Kidney (tissue), 22 donors: ENCODE measurements at regions of chr14 and their contacts with region 1.

Region 1: GRCh38 chr14:96098309-96099001 is 59.3 kb downstream of the C14orf132 start:
- DNase-seq: peak in 4 of 5 donors; percentile 70 to 86 (median 76)
- H3K4me3 ChIP-seq: no peak overlapping the region
- H3K27ac ChIP-seq: no peak overlapping the region
- H3K4me1 ChIP-seq: peaks cover 0 to 7% (median 5%) of the 10 kb centered on the region in 3 donors
- H3K27me3 ChIP-seq: no peaks in the 10 kb centered on the region
- CTCF ChIP-seq: peak; percentile 45

Region 2: DNA sequence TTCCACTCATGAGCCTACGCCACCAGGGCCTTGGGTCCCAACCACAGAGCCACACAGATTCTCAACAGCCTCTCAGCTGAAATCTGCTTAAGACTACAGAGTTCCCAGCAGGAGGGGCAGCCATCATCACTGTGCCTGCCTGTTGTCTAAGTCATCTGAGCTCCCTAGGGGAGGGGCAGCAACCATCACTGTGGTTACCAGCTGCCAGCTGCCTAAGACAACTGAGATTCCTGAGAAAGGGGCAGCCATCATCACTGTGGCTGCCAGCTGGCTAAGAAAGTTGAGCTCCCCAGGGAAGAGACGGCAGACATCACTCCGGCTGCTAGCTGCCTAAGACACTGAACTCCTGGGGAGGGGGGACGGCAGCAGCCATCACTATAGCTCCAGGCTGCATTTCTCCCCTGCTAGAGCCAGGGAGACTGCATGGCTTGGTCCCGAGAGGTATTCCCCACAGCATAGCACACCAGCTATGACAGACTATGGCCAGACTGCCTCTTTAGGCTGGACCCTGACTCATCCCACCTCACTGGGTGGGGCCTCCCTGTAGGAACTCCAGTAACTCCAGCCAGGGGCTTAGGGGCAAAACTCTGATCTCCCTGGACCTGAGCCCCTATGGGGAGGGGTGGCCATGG is 96.5 kb before region 1 on chr14:
- intact Hi-C with region 1: loop called (anchors 10 kb)
- DNase-seq: peak in 4 of 5 donors; percentile 55 to 71 (median 64)
- H3K4me3 ChIP-seq: no peak overlapping the region
- H3K27ac ChIP-seq: no peak overlapping the region
- H3K4me1 ChIP-seq: no peaks in the 10 kb centered on the region
- H3K27me3 ChIP-seq: no peaks in the 10 kb centered on the region
- CTCF ChIP-seq: no peak

Region 3: DNA sequence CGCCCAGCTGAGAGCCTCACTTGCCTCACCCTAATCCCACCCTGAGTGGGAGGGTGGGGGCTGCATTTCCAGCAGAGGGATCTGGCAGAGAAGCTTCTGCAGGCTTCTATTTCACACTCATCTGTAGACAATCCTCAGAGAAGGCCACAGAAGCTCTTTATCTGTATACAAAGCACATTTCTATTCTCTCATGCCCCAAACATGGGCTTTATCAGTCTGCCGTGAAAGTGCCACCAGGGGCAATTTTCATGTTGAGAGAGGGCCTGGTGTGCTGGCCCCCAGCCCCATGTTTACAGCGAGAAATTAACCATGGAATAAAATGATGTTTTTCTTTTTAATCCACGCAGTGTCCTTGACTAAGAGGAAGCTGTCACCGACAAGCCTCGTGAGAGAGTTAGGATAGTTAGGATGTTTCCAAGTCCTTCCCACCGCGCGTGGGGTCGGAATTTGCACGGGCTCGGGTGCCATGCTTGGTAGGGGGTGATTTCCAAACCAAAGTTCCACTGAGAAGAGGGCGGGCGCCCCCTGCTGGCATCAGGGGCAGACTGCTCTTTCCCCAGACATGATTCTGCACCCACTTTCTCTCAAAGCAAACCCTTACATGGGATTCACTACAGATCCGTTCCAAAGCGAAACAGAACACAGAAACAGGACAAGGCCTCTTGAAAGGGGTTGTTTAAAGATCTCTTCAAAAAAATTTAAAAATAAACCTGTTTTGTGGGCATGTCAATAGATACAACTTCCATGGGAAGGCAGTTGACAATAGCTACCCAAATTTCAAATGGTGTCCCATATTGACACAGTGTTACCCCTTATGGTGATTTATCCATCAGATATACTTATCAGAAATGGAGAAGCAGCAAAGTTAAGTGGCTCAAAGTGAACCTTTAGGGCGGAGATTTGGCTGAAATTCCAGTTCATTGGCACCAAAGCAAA is 177.0 kb after region 1 on chr14:
- intact Hi-C with region 1: loop called (anchors 5 kb)
- DNase-seq: peak; percentile 67 to 89 (median 79)
- H3K4me3 ChIP-seq: no peak overlapping the region
- H3K27ac ChIP-seq: no peak overlapping the region
- H3K4me1 ChIP-seq: no peaks in the 10 kb centered on the region
- H3K27me3 ChIP-seq: no peaks in the 10 kb centered on the region
- CTCF ChIP-seq: peak; percentile 87

Region 4: GRCh38 chr14:96424109-96424989 is 325.9 kb after region 1 on chr14:
- intact Hi-C with region 1: loop called (anchors 10 kb)
- DNase-seq: peak in 4 of 5 donors; percentile 56 to 91 (median 80)
- H3K4me3 ChIP-seq: peak overlapping the region; percentile 58 to 69 (median 65)
- H3K27ac ChIP-seq: no peak overlapping the region
- H3K4me1 ChIP-seq: peaks cover 0 to 4% (median 0%) of the 10 kb centered on the region in 3 donors
- H3K27me3 ChIP-seq: no peaks in the 10 kb centered on the region
- CTCF ChIP-seq: peak; percentile 83